Tibial artery (tissue), 4 donors: ENCODE measurements at regions of chrX and their contacts with region 1.

Region 1: DNA sequence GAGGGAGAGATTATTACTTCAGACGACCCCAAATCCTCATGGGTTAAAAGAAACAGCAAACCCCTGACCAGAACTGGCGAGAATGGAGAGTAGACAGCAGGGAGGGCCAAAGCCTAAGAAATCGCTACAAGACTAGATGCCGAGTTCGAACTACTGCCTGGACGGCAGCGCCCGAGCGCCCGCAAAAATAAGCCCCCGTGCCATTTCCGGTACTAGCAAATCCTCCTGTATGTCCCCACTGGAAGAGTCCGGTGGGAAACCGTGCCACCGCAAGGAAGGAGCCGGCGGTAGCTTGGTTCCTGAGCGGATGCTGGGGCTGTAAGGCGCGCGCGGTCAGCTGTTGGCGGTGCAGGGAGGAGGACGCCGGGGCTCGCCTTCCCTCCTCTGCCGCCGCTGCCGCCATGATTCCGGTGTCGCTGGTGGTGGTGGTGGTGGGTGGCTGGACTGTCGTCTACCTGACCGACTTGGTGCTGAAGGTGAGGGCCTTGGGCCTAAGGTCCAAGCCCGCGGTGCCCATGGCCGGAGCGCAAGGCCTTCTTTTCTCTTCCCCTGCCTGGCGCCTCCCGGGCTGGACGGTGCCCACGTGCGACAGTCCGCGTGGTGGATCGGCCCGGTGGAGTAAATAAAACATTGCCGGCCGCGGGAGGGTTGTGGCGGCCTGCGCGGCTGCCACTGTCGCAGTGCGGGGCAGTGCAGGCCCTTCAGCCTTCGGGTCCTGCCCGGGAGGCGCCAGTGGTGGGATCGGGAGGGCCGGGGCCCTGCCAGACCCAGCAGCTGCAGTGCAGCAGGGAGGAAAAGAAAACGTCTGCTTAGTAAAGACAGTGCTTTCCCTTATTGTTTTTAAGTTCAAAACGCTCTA is at the start of gene MBTPS2:
- DNase-seq: peak; percentile 71 to 92
- H3K4me3 ChIP-seq: peak within 1 kb of the TSS; percentile 78 to 84
- H3K27ac ChIP-seq: peak within 1 kb of the TSS; percentile 83 to 91
- H3K4me1 ChIP-seq: peaks cover 0 to 15% (median 0%) of the 10 kb centered on the region in 4 donors
- H3K27me3 ChIP-seq: no peaks in the 10 kb centered on the region
- CTCF ChIP-seq: no peak

Region 2: DNA sequence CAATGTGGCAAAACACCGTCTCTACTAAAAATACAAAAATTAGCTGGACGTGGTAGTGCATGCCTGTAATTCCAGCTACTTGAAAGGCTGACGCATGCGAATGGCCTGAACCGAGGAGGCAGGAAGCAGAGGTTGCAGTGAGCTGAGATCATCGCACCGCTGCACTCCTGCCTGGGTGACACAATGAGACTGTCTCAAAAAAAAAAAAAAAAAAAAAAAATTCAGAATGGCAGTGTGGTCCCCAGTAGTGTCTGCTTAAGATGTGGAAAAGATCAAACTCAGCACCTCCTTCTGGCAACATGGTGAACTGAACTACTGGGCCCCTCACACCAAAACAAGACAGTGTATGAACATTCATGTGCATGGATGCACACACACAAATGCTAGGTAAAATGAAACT is 133.2 kb after region 1 on chrX:
- intact Hi-C with region 1: loop called (anchors 10 kb)
- DNase-seq: no peak
- H3K4me3 ChIP-seq: no peak overlapping the region
- H3K27ac ChIP-seq: peak overlapping the region in 1 of 2 donors; percentile 35
- H3K4me1 ChIP-seq: peaks cover 0 to 29% (median 0%) of the 10 kb centered on the region in 4 donors
- H3K27me3 ChIP-seq: no peaks in the 10 kb centered on the region
- CTCF ChIP-seq: no peak